Endothelial cell of umbilical vein (primary cell): ENCODE measurements at regions of chr7 and their contacts with region 1.

Region 1: DNA sequence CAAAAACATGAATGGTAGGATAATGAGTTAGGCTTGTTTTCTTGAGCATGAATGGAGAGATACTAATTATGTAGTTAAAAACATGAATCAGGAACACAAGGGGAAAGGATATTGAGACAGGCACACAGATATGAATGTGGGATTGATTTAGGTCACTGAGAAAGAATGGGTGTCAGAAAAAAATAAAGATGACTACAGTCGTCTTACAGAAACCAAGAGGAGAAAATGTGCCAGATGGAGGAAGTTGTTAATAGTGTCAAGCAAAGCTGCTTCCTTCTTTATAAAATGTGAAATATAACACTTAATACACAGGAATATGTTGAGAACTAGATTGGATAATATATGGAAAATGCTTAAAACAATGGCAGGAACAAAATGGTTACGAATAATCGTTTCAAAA is 173.3 kb upstream of the BET1 start:
- DNase-seq: peak; percentile 96
- H3K4me3 ChIP-seq: no peak overlapping the region
- H3K27ac ChIP-seq: peak overlapping the region; percentile 89
- H3K4me1 ChIP-seq: peaks cover 67% of the 10 kb centered on the region
- H3K27me3 ChIP-seq: no peaks in the 10 kb centered on the region
- CTCF ChIP-seq: no peak
- POLR2A ChIP-seq: no peak

Region 2: GRCh38 chr7:94160719-94161435 is 16.6 kb before region 1 on chr7:
- CTCF ChIA-PET with region 1: no interaction called
- POLR2A ChIA-PET with region 1: no interaction called
- dilution Hi-C with region 1: no loop called
- intact Hi-C with region 1: loop called (anchors 1 kb)
- DNase-seq: no peak
- H3K4me3 ChIP-seq: no peak overlapping the region
- H3K27ac ChIP-seq: no peak overlapping the region
- H3K4me1 ChIP-seq: peaks cover 17% of the 10 kb centered on the region
- H3K27me3 ChIP-seq: no peaks in the 10 kb centered on the region
- CTCF ChIP-seq: no peak
- POLR2A ChIP-seq: no peak